MCF 10A (cell line): ENCODE measurements at regions of chrX and their contacts with region 1.

Region 1: GRCh38 chrX:102950908-102951866 is 14.1 kb downstream of the RAB40AL start:
- DNase-seq: peak; percentile 74
- H3K4me3 Mint-ChIP-seq: no peak overlapping the region
- H3K27ac Mint-ChIP-seq: no peak overlapping the region
- H3K4me1 Mint-ChIP-seq: peaks cover 5% of the 10 kb centered on the region
- H3K27me3 Mint-ChIP-seq: peaks cover 64% of the 10 kb centered on the region
- CTCF ChIP-seq: peak; percentile 58

Region 2: GRCh38 chrX:102934624-102935023 is 16.6 kb before region 1 on chrX:
- CTCF ChIA-PET with region 1: interaction called, 14 read pairs
- POLR2A ChIA-PET with region 1: no interaction called
- intact Hi-C with region 1: no loop called
- DNase-seq: peak; percentile 53
- H3K4me3 Mint-ChIP-seq: no peak overlapping the region
- H3K27ac Mint-ChIP-seq: no peak overlapping the region
- H3K4me1 Mint-ChIP-seq: no peaks in the 10 kb centered on the region
- H3K27me3 Mint-ChIP-seq: peaks cover 32% of the 10 kb centered on the region
- CTCF ChIP-seq: peak; percentile 57

Region 3: DNA sequence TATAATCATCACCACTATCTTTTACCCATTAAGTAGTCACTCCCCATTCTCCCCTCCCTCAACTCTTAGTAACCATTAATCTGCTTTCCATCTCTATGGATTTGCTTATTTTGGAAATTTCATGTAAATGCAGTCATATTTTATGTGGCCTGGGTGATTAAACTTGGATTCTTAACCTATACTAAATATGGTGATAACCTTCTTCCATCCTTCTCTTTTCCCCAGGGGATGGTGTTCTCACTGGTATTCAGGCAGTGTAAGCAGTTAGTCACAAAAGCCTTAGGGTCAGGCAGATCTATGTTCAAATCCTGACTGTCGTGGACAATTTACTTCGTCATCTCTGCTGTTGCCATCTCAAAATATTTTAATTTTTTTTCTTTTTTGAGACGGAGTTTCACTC is 15.5 kb after region 1 on chrX:
- CTCF ChIA-PET with region 1: interaction called, 16 read pairs
- POLR2A ChIA-PET with region 1: no interaction called
- intact Hi-C with region 1: no loop called
- DNase-seq: no peak
- H3K4me3 Mint-ChIP-seq: no peak overlapping the region
- H3K27ac Mint-ChIP-seq: no peak overlapping the region
- H3K4me1 Mint-ChIP-seq: no peaks in the 10 kb centered on the region
- H3K27me3 Mint-ChIP-seq: peaks cover 15% of the 10 kb centered on the region
- CTCF ChIP-seq: no peak

Region 4: DNA sequence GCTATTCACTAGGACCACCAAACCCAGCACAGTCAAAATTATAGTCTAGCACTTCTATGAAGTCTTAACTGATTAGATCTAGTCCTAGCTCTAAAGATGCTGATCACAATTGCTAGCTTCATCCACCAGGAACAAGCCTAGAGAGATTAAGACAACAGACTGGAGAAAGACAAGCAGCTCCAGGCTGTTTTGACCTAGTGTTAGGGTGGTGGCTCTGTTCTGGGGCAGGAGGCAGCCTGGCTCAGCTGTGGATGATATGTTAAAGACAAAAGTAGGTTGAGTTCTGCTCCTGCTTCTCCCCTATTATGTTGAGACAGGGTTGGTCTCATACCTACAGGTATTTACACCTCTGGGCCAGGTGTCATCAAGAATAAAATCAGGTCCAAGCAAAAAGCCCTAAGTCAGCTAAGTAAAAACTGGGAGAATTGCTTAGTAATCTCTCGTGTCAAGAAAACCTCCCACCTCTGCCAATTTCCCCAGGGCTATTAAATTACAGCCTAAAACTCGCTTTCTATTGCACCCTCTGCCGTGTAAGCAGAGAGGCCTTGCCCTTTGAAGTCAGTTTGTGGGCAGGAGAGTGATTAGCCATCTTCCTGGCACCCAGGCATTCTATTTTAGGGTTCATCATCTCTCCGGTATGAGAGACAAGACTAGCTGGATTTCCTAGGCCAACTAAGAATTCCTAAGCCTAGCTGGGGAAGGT is 25.8 kb after region 1 on chrX:
- CTCF ChIA-PET with region 1: interaction called, 18 read pairs
- POLR2A ChIA-PET with region 1: no interaction called
- intact Hi-C with region 1: no loop called
- DNase-seq: peak; percentile 87
- H3K4me3 Mint-ChIP-seq: no peak overlapping the region
- H3K27ac Mint-ChIP-seq: peak overlapping the region; percentile 49
- H3K4me1 Mint-ChIP-seq: peaks cover 17% of the 10 kb centered on the region
- H3K27me3 Mint-ChIP-seq: peaks cover 41% of the 10 kb centered on the region
- CTCF ChIP-seq: no peak

Region 5: DNA sequence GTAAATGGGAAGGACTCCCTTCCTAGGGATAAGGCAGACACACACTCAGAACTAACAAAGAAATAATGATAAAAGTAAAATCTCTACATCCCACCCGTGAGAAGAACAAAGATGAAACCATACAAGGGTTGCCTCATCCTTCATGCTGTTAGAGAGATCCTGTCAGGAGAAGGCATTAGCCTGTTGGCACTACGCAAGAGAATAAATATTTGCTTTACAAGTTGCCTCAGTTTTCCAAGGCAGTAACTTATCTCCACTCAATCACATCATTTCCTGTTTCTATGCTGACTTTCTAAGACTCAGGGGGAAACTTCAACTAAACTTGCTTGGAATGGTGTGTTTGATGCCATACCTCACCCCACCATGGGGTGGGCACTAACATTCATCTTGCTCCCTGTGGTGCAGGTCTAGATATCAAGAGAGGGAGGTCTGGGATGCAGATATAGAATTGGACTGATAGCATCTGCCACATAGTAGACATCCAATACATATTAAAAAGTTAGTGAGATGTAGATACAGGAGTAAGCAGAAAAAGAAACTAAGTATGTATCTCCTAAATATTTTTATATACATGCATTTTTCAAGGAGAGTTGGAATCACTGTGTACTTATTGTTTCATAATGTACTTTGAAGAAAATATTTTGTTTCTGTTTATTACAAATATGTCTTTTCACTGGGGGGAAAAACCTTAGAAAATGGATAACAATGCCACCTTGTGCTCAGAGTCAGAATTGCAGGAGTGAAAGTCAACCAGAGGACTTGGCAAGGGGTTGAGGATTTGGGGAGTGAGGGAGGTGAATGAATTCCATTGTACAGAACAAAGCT is 206.5 kb after region 1 on chrX:
- CTCF ChIA-PET with region 1: interaction called, 19 read pairs
- POLR2A ChIA-PET with region 1: no interaction called
- intact Hi-C with region 1: loop called (anchors 1 kb)
- DNase-seq: peak; percentile 59
- H3K4me3 Mint-ChIP-seq: no peak overlapping the region
- H3K27ac Mint-ChIP-seq: no peak overlapping the region
- H3K4me1 Mint-ChIP-seq: peaks cover 15% of the 10 kb centered on the region
- H3K27me3 Mint-ChIP-seq: peaks cover 58% of the 10 kb centered on the region
- CTCF ChIP-seq: peak; percentile 81

Region 6: DNA sequence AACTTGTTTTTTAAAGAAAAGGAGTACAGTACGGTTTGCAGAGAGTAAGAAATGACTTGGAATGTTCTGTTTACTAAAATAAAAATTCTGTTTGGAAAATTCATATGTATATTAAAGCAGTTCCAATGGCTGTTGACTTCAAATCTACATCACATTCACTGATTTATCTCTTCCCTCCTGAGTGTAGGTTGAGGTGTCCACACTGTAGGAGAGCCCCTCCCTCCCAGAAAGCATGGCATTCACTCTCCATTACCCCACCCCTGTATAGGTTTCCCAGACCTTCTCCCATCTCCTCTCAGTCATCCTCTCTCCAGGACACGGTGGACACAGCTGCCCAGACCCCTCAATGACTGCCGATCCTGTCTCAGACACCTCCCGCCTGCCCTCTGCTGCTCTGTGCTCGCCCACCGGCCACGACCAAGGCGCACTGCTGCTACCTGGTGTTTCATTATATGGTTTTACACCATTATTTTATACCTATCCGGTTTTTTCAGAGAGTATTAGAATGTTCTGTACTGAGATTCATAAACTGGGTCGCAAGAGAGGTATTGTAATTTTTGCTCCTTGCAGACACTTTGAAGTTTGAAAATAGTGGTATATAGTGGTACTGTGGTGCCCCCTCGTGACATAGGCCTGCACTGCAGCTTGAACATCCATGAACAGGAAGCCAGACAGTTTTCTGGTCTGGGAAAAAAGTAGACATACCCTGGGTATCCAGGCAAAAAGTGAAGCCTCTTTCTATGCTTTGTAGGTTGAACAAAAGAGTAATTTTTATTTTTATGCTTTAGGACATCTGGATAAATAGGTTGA is 225.0 kb after region 1 on chrX:
- CTCF ChIA-PET with region 1: interaction called, 17 read pairs
- POLR2A ChIA-PET with region 1: interaction called, 3 read pairs
- intact Hi-C with region 1: loop called (anchors 1 kb)
- DNase-seq: peak; percentile 55
- H3K4me3 Mint-ChIP-seq: no peak overlapping the region
- H3K27ac Mint-ChIP-seq: no peak overlapping the region
- H3K4me1 Mint-ChIP-seq: peaks cover 5% of the 10 kb centered on the region
- H3K27me3 Mint-ChIP-seq: peaks cover 64% of the 10 kb centered on the region
- CTCF ChIP-seq: peak; percentile 80